ENCODE measurements at regions of chr2 and their contacts with region 1.

Region 1: DNA sequence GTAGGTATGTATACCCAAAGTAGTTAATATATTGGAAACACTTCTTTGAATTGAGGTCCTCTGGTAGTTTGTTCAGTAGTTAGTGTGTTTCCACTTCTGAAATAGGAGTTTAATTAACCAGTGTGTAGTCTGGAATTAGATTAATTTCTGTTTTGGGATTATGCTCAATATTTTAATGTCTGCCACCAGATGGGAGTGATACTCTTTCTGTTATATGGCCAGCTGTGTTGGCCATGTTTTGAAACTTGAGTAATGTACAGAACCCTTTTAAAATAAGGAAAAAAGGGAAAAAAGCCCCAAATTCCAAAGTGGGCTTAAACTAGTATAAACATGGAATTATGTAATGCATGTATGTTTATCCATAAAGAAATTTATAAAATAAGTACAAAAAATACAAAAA is 147.7 kb downstream of the CTNNA2 start:
- DNase-seq: no peak
- H3K4me3 ChIP-seq: no peak overlapping the region
- CTCF ChIP-seq: no peak

Region 2: GRCh38 chr2:79649531-79649930 is 11.0 kb before region 1 on chr2:
- CTCF ChIA-PET with region 1: no interaction called
- POLR2A ChIA-PET with region 1: no interaction called
- DNase-seq: no peak
- H3K4me3 ChIP-seq: no peak overlapping the region
- CTCF ChIP-seq: no peak

Region 3: DNA sequence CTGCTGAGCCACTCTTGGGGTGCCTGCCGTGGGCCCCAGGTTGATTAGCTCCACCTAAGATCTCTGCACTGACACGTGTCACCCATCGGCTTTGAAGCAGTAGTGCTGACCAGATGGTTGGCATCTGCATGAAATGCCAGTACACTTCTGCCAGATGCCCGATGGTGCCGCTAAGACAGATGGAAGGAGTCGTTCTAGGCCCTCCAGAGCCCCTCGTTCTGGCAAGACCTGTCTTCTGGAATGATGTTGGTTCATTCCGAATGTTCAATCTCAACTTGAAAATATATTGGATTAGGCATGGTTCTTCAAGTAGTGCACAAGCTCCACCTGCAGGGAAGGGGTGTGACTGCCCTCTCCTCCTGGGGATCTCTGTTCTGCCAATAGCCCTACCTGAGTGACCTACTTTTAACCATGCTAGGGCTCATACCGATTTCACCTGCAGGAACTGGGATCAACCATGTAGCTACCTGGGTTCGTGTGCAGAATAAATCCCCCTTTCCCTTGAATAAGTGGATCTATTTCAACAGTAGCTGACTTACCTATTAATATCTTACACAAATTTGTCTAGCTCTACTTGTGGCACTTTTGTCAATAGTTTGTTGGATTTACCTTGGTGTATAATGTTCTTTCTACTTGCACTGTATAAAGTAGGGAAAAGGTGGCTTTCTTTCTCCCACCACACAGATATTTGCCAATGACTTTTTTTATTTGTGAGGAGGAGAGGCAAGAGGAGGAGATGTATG is 194.9 kb after region 1 on chr2:
- CTCF ChIA-PET with region 1: interaction called, 58 read pairs
- POLR2A ChIA-PET with region 1: no interaction called
- DNase-seq: no peak
- H3K4me3 ChIP-seq: no peak overlapping the region
- CTCF ChIP-seq: peak; percentile 42

Region 4: DNA sequence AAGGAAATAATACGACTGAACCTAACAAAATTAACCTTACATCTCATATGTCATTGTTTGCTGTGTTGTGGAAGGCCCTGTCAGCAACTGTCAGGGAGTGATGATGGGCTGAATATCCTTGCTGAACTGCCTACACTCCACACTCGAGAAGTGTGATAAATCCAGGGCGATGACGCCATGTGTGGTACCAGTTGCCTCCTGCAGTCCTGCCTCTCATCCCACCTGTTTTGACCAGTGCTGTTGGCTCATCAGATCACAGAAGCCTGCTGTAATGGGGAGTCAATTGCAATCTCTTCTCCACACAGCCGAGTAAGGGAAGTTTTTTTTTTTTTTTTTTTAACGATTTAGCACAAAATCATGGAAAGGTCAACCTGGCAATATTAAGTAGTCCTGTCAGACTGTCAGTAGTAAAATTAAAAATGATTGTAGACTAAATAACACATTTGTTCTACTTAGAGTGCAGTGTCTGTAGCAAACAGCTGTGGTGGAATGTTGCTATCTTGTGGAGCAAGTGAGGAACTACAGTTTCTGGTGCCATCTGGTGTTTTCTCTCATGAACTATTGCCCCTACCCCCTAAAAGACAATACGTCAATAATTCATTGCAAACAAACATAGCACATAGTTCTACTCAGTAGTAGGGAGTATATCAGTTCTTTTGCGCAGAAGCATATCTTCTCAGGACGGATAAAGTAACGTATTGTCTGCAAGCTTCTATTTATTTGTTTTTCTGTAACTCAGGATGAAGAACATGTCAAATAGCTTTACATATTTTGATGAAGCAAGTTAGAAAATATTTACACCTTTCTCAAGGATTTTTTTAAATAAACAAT is 199.9 kb after region 1 on chr2:
- CTCF ChIA-PET with region 1: interaction called, 58 read pairs
- POLR2A ChIA-PET with region 1: no interaction called
- DNase-seq: peak; percentile 0
- H3K4me3 ChIP-seq: no peak overlapping the region
- CTCF ChIP-seq: peak; percentile 59